ENCODE measurements at regions of chr9 and their contacts with region 1.

Region 1: DNA sequence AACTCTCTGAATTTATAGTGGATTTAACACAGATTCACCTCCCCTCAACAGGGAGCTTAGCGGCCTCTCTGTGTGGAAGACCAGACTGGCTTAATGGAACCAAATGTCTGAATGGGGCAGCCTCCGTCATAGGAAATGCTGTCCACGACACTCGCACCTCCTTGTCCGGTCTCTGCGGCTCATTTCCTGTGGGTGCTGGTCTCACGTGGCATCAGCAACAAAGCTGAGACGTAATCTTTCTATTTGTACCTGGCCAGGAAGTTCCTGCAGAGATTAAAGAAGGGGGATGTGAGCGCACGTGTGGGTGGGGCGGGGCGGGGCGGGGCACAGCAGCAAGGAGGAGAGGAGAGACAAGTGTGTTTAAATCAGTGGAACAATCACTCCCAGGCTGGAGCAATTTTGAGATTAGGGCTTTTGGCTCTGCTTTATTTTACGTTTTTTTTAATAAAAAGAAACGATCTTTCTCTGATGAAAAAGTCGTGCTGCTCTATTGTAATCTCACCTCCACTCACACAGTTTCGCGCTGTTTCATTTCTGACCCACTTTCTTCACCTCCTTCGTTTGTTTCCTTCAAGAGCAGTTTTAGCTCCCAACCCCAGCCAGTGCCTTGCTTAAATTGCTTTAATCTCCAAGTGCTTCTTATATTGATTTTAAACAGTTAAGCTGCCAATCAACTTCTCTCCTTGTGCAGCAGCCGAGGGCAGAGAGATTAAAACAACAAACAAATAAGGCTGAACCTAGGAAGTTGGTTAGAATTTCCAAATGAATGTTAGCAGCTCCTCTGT is 132.2 kb upstream of the ASTN2 start:
- DNase-seq: no peak
- ATAC-seq: 0 out of 2 replicates have a peak, but pooled peaks have one; percentile 5
- H3K4me3 Mint-ChIP-seq: peak overlapping the region; percentile 38
- H3K27ac Mint-ChIP-seq: no peak overlapping the region
- H3K4me1 Mint-ChIP-seq: peaks cover 62% of the 10 kb centered on the region
- H3K27me3 Mint-ChIP-seq: no peaks in the 10 kb centered on the region
- CTCF ChIP-seq: no peak

Region 2: DNA sequence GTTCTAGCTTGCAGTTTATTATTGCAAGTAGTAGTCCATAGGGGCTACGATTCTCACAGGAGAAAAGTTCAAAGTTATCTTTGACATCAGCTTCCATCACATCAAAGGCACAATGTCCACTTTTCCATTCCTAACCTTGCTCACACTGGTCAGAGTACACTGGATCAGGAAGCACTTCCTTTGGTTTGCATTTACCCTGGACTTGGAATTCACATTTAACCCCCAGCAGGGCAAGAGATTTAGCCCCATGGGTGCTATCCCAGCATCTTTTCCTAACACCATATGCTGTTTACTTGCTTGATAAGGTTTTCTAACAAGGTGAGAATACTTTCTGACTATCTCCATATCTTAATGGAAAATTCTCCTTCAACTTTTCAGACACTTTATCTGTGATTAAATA is 76.6 kb before region 1 on chr9:
- CTCF ChIA-PET with region 1: no interaction called
- POLR2A ChIA-PET with region 1: no interaction called
- DNase-seq: no peak
- ATAC-seq: no peak
- H3K4me3 Mint-ChIP-seq: no peak overlapping the region
- H3K27ac Mint-ChIP-seq: no peak overlapping the region
- H3K4me1 Mint-ChIP-seq: no peaks in the 10 kb centered on the region
- H3K27me3 Mint-ChIP-seq: no peaks in the 10 kb centered on the region
- CTCF ChIP-seq: no peak

Region 3: GRCh38 chr9:117535434-117535833 is 11.7 kb before region 1 on chr9:
- CTCF ChIA-PET with region 1: interaction called, 12 read pairs
- POLR2A ChIA-PET with region 1: no interaction called
- DNase-seq: no peak
- ATAC-seq: peak; percentile 99
- H3K4me3 Mint-ChIP-seq: no peak overlapping the region
- H3K27ac Mint-ChIP-seq: no peak overlapping the region
- H3K4me1 Mint-ChIP-seq: peaks cover 9% of the 10 kb centered on the region
- H3K27me3 Mint-ChIP-seq: no peaks in the 10 kb centered on the region; the same call in 1 of the 2 replicates
- CTCF ChIP-seq: no peak